Gastrocnemius medialis (tissue), 4 donors: ENCODE measurements at regions of chr19 and their contacts with region 1.

Region 1: GRCh38 chr19:16470911-16471811 is 609 bp downstream of the EPS15L1 start:
- DNase-seq: peak in 1 of 2 donors; percentile 67
- ATAC-seq: peak; percentile 28 to 44
- H3K4me3 ChIP-seq: peak overlapping the region; percentile 70 to 84 (median 77)
- H3K27ac ChIP-seq: peak overlapping the region; percentile 91 to 99 (median 96)
- H3K4me1 ChIP-seq: peaks cover 48 to 55% of the 10 kb centered on the region in 2 donors
- H3K27me3 ChIP-seq: no peaks in the 10 kb centered on the region
- CTCF ChIP-seq: no peak
- POLR2A ChIP-seq: peak; percentile 24 to 35

Region 2: DNA sequence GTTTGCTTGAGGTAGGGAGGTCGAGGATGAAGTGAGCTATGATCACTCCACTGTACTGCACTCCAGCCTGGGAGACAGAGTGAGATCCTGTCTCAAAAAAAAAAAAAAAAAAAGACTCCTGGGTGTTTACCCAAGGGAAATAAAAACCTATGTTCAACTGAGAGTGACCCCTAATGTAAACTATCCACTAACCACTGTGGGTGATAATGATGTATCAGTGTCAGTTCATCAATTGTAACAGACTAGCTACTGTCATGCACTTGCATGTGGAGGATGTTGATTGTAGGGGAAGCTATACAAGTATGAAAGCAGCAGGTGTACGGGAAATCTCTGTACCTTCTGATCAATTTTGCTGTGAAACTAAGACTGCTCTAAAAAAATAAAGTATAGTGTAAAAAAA is 295.2 kb before region 1 on chr19:
- in situ Hi-C with region 1: no loop called
- intact Hi-C with region 1: no loop called
- DNase-seq: no peak
- ATAC-seq: no peak
- H3K4me3 ChIP-seq: no peak overlapping the region
- H3K27ac ChIP-seq: no peak overlapping the region
- H3K4me1 ChIP-seq: no peaks in the 10 kb centered on the region
- H3K27me3 ChIP-seq: peaks cover 0 to 7% (median 2%) of the 10 kb centered on the region in 3 donors
- CTCF ChIP-seq: no peak
- POLR2A ChIP-seq: no peak

Region 3: DNA sequence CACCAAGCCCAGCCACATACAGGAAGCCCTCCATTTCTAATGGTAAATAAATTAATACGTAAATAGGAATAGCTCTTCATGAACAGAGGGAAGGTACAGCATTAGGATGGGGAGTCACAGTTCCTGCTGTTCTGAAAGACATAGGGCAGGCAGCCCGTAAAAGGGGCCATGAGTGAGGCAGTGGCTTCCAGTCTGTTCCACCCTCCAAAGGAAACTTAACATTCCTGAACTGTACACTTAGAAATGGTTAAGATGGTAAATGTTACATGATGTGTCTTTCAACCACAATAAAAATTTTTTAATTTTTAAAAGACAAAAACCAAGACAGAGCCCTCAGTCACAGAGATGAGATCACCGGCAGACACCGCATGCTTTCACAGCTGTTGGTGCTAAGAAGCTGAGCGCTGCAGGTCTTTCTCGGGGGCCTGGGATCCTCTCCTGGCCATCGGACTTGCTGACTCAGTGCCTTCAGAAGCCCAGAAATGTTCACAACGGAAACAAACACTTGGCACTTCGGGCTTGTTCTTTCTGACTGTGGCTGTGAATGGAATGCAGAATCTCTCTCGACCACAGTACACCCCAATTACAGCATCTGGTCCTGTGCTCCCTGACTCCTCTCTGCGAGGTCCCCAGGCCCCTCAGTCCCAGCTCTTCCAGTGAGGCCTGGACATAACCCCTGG is 35.8 kb before region 1 on chr19:
- in situ Hi-C with region 1: no loop called
- intact Hi-C with region 1: loop called (anchors 5 kb)
- DNase-seq: peak in 1 of 2 donors; percentile 66
- ATAC-seq: peak; percentile 28 to 81
- H3K4me3 ChIP-seq: no peak overlapping the region
- H3K27ac ChIP-seq: peak overlapping the region; percentile 66 to 95 (median 88)
- H3K4me1 ChIP-seq: peaks cover 29 to 36% of the 10 kb centered on the region in 2 donors
- H3K27me3 ChIP-seq: no peaks in the 10 kb centered on the region
- CTCF ChIP-seq: no peak
- POLR2A ChIP-seq: no peak

Region 4: GRCh38 chr19:16536130-16536529 is 65.0 kb after region 1 on chr19:
- in situ Hi-C with region 1: no loop called
- intact Hi-C with region 1: no loop called
- DNase-seq: no peak
- ATAC-seq: no peak
- H3K4me3 ChIP-seq: no peak overlapping the region
- H3K27ac ChIP-seq: no peak overlapping the region
- H3K4me1 ChIP-seq: peaks cover 14 to 23% of the 10 kb centered on the region in 2 donors
- H3K27me3 ChIP-seq: no peaks in the 10 kb centered on the region
- CTCF ChIP-seq: no peak
- POLR2A ChIP-seq: no peak

Region 5: GRCh38 chr19:18044825-18045304 is 1573.7 kb after region 1 on chr19:
- in situ Hi-C with region 1: loop called in 2 of 4 experiments (anchors 25 kb)
- intact Hi-C with region 1: no loop called
- DNase-seq: peak; percentile 82 to 83
- ATAC-seq: peak; percentile 80 to 91
- H3K4me3 ChIP-seq: peak overlapping the region; percentile 40 to 62 (median 54)
- H3K27ac ChIP-seq: peak overlapping the region; percentile 81 to 91 (median 90)
- H3K4me1 ChIP-seq: peaks cover 35 to 39% of the 10 kb centered on the region in 2 donors
- H3K27me3 ChIP-seq: no peaks in the 10 kb centered on the region
- CTCF ChIP-seq: no peak
- POLR2A ChIP-seq: peak; percentile 33 to 81